CD8-positive, alpha-beta T cell (primary cell): ENCODE measurements at regions of chr5 and their contacts with region 1.

Region 1: DNA sequence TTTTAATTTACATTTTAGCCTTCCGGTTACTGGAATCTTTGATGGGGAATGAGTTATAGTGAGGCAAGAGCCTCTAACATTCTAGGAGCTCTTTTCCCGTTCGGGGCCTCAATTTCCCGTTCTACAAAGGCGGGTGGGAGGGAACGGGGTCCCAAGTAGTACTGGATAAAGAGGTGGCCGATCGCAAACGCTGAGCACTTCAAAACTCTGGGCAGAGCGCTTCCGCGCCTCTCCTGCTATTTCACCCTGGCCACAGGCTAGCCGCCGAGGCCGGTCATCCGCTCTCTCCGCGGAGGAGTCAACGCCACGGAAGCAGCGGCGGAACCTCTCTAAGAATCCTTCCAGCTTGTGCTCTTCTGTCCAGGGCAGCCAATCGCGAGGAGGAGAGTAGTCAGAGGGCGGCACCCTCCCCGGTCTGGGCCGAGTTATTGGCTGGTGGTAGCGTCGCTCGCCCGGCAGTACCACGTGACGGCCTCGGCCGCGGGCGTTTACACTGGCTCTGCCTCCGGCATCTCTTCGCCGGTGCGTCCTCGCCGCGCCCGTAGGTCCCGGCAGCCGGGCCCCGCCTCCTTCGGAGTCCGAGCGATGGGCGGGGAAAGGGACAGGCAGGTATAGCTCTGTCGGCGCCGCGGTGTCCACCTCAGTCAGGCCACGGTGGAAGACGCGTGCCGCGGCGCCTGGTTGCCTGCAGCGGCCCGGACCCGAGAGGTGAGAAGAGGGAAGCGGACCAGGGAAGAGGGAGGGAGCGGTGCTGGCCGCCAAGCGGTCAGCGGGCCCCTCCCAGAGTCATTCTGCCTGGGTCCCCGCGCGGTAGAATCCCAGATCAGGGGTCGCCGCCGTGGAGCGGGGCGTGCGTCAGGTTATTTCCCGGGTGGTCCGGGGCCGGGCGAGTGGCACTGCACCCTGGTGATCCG is at the start of gene SLC26A2:
- DNase-seq: peak; percentile 83 to 97 (median 93)
- ATAC-seq: peak; percentile 95
- H3K4me3 ChIP-seq: peak within 1 kb of the TSS; percentile 85 to 99
- H3K4me3 Mint-ChIP-seq: peak within 1 kb of the TSS; percentile 97
- H3K27ac ChIP-seq: peak within 1 kb of the TSS; percentile 66 to 77
- H3K27ac Mint-ChIP-seq: peak within 1 kb of the TSS; percentile 97
- H3K4me1 ChIP-seq: peaks cover 26% of the 10 kb centered on the region
- H3K4me1 Mint-ChIP-seq: peaks cover 39% of the 10 kb centered on the region
- H3K27me3 ChIP-seq: no peaks in the 10 kb centered on the region
- H3K27me3 Mint-ChIP-seq: no peaks in the 10 kb centered on the region
- CTCF ChIP-seq: no peak
- total RNA-seq, gene SLC26A2: 2.0 to 2.2 TPM

Region 2: GRCh38 chr5:149357370-149358293 is 602.9 kb before region 1 on chr5 and contains the start of gene PCYOX1L:
- CTCF ChIA-PET with region 1: no interaction called
- POLR2A ChIA-PET with region 1: no interaction called
- intact Hi-C with region 1: loop called (anchors 2 to 5 kb)
- DNase-seq: peak; percentile 89 to 99 (median 95)
- ATAC-seq: peak; percentile 96
- H3K4me3 ChIP-seq: peak within 1 kb of the TSS; percentile 83 to 88
- H3K4me3 Mint-ChIP-seq: peak within 1 kb of the TSS; percentile 93
- H3K27ac ChIP-seq: peak within 1 kb of the TSS; percentile 63 to 74
- H3K27ac Mint-ChIP-seq: peak within 1 kb of the TSS; percentile 92
- H3K4me1 ChIP-seq: peaks cover 37% of the 10 kb centered on the region
- H3K4me1 Mint-ChIP-seq: peaks cover 67% of the 10 kb centered on the region
- H3K27me3 ChIP-seq: no peaks in the 10 kb centered on the region
- H3K27me3 Mint-ChIP-seq: no peaks in the 10 kb centered on the region
- CTCF ChIP-seq: no peak
- total RNA-seq, gene PCYOX1L: 18.9 to 21.9 TPM

Region 3: DNA sequence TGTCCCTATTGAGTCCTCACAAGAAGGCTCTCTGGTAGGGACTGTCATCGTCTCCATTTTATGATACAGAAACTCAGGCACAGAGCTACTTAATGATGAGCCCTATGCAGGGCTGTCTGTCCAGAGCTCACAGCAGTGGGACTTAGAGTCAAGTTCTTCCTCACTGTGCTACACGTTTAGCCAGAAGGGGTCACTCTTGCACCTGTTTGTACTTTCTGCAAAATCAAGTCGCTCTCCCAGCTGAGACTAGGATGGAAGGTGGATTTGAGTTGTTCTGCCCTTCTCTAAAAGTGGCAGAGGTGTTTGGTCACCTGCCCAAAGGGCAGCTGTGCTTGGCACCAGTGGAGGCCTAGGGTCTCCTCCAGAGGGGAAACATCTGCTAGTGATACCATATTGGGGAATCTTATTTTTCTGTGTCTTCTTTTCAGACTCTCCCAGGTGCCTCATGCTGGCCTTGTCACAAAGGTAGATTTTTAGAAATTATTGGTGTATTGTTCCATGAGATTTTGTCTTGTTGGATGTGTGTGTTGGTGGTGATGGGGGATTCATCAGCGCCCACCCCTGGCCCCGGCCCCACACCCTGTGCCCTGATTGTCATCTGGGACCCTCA is 126.2 kb before region 1 on chr5:
- CTCF ChIA-PET with region 1: interaction called, 20 read pairs
- POLR2A ChIA-PET with region 1: no interaction called
- intact Hi-C with region 1: no loop called
- DNase-seq: peak in 8 of 9 experiments; percentile 20 to 75 (median 45)
- ATAC-seq: peak; percentile 62
- H3K4me3 ChIP-seq: no peak overlapping the region
- H3K4me3 Mint-ChIP-seq: no peak overlapping the region
- H3K27ac ChIP-seq: no peak overlapping the region
- H3K27ac Mint-ChIP-seq: no peak overlapping the region
- H3K4me1 ChIP-seq: no peaks in the 10 kb centered on the region
- H3K4me1 Mint-ChIP-seq: no peaks in the 10 kb centered on the region
- H3K27me3 ChIP-seq: no peaks in the 10 kb centered on the region
- H3K27me3 Mint-ChIP-seq: no peaks in the 10 kb centered on the region
- CTCF ChIP-seq: peak; percentile 52

Region 4: DNA sequence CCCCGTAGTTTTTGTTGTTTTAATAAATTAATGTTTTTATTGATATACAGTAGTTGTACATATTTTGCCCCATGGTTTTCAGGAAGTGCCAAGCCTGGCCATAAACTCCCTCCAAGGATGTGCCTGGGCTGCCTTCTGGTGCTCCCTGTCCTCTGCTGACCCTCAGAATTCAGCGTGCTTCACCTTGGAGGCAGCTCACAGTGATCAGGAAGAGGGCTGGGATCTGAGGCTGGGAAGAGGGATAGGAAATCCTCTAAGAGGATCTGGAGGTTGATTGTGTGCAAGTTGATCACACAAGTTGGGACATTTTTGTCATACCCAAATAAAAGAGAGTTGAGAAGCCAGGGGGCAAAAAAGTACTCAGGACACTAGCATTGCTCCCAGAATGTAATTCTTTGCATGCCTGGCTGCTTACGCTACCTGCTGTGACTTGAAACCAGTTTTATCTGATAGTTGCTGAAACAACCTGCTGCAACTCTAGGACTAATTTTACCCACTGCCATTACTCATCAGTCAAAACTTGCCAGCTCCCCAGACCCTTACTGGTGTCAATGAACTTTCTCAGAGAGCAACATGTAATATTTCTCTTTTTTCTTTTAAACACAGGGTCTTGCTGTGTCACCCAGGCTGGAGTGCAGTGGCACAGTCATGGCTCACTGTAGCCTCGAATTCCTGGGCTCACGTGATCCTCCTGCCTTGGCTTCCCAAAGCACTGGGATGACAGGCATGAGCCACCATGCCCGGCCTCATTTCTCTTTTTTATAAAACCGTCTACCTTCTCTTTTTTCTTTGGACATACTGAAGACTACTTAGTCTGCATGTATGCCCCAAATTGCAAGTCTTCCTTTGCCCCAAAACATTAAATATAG is 44.9 kb before region 1 on chr5:
- CTCF ChIA-PET with region 1: no interaction called
- POLR2A ChIA-PET with region 1: no interaction called
- intact Hi-C with region 1: no loop called
- DNase-seq: no peak
- ATAC-seq: no peak
- H3K4me3 ChIP-seq: no peak overlapping the region
- H3K4me3 Mint-ChIP-seq: no peak overlapping the region
- H3K27ac ChIP-seq: no peak overlapping the region
- H3K27ac Mint-ChIP-seq: no peak overlapping the region
- H3K4me1 ChIP-seq: no peaks in the 10 kb centered on the region
- H3K4me1 Mint-ChIP-seq: no peaks in the 10 kb centered on the region
- H3K27me3 ChIP-seq: no peaks in the 10 kb centered on the region
- H3K27me3 Mint-ChIP-seq: peaks cover 16% of the 10 kb centered on the region
- CTCF ChIP-seq: no peak

Region 5: GRCh38 chr5:151183451-151184245 is 1223.1 kb after region 1 on chr5:
- CTCF ChIA-PET with region 1: no interaction called
- POLR2A ChIA-PET with region 1: no interaction called
- intact Hi-C with region 1: no loop called
- DNase-seq: no peak
- ATAC-seq: no peak
- H3K4me3 ChIP-seq: no peak overlapping the region
- H3K4me3 Mint-ChIP-seq: no peak overlapping the region
- H3K27ac ChIP-seq: no peak overlapping the region
- H3K27ac Mint-ChIP-seq: peak overlapping the region; percentile 14
- H3K4me1 ChIP-seq: no peaks in the 10 kb centered on the region
- H3K4me1 Mint-ChIP-seq: peaks cover 23% of the 10 kb centered on the region
- H3K27me3 ChIP-seq: no peaks in the 10 kb centered on the region
- H3K27me3 Mint-ChIP-seq: no peaks in the 10 kb centered on the region
- CTCF ChIP-seq: no peak